Activated T-helper 1 cell treated with anti-CD3 and anti-CD28 coated beads, Interleukin-12 subunit alpha, Interleukin-12 subunit beta, Interleukin-2, Interleukin-4 antibody, amounts not matched to agents 30 ng/mL and 10 ng/mL and 1 ng/mL, durations not matched to agents 14 hours and 24 hours and 36 hours (primary cell): ENCODE measurements at regions of chr20 and their contacts with region 1.

Region 1: GRCh38 chr20:44885392-44886265 is at the start of gene YWHAB:
- DNase-seq: peak; percentile 97
- H3K4me3 Mint-ChIP-seq: peak within 1 kb of the TSS; percentile 95
- H3K27ac Mint-ChIP-seq: peak within 1 kb of the TSS; percentile 94
- H3K4me1 Mint-ChIP-seq: peaks cover 54% of the 10 kb centered on the region
- H3K27me3 Mint-ChIP-seq: no peaks in the 10 kb centered on the region
- total RNA-seq, gene YWHAB: 230 and 246 TPM in 2 replicates

Region 2: GRCh38 chr20:44475694-44476560 is 409.7 kb before region 1 on chr20 and contains the start of gene TTPAL:
- intact Hi-C with region 1: loop called (anchors 2 kb)
- DNase-seq: peak; percentile 90
- H3K4me3 Mint-ChIP-seq: peak within 1 kb of the TSS; percentile 95
- H3K27ac Mint-ChIP-seq: peak within 1 kb of the TSS; percentile 93
- H3K4me1 Mint-ChIP-seq: peaks cover 20% of the 10 kb centered on the region
- H3K27me3 Mint-ChIP-seq: peaks cover 3% of the 10 kb centered on the region
- total RNA-seq, gene TTPAL: 22.9 and 24.7 TPM in 2 replicates

Region 3: GRCh38 chr20:44738813-44739477 is 146.7 kb before region 1 on chr20:
- intact Hi-C with region 1: loop called (anchors 1 kb)
- DNase-seq: peak; percentile 63
- H3K4me3 Mint-ChIP-seq: peak overlapping the region; percentile 77
- H3K27ac Mint-ChIP-seq: peak overlapping the region; percentile 23
- H3K4me1 Mint-ChIP-seq: peaks cover 34% of the 10 kb centered on the region
- H3K27me3 Mint-ChIP-seq: peaks cover 4% of the 10 kb centered on the region

Region 4: DNA sequence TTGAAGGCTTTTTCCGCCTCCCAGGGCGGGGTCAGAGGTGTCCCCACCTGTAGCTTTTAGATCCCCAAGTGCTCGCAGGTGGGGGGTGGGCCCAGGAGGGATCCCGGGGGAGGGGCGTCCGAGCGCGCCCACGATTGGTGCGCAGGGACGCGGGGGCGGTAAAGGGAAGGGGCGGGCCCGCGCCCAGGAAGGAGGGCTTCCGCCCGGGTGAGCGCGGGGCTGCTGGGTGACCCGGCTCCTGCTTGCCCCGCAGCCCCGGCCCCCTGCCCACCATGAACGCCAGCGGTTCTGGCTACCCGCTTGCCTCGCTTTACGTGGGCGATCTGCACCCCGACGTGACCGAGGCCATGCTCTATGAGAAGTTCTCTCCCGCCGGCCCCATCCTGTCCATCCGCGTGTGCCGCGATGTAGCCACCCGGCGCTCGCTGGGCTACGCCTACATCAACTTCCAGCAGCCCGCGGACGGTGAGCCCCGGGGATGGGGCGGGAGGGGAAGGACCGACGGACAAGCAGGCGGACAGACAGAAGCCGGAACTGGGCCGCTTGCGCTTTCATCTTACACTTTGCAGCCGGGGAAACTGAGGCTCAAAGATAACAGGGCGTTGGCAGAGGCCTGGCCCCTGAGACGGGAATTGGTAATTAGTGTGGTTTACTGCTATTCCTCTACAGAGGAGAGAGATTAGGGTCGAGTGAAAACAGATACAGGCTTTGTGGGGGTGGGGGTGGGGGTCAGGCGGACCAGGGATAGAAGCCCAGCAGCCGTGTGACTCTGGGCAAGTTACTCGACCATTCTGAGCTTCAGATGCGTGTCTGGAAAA is 24.5 kb after region 1 on chr20 and contains the start of gene PABPC1L:
- intact Hi-C with region 1: loop called (anchors 1 kb)
- DNase-seq: peak; percentile 72
- H3K4me3 Mint-ChIP-seq: peak within 1 kb of the TSS; percentile 87
- H3K27ac Mint-ChIP-seq: peak within 1 kb of the TSS; percentile 84
- H3K4me1 Mint-ChIP-seq: peaks cover 32% of the 10 kb centered on the region
- H3K27me3 Mint-ChIP-seq: no peaks in the 10 kb centered on the region
- total RNA-seq, gene PABPC1L: 101 and 106 TPM in 2 replicates

Region 5: DNA sequence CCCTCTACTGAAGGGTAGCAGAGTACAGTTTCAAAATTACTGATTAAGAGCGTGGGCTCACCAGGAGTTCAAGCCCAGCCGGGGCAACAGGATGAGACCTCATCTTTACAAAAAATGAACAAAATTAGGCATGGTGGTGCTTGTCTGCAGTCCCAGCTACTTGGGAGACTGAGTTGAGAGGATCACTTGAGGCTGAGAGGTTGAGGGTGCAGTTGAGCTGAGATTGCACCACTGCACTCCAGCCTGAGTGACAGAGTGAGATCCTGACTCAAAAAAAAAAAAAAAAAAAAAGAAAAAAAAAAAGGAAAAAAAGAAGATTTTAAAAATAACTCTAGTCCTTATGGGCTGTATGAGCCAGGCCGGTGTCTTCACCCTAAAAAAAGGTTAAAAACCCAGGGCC is 43.0 kb after region 1 on chr20:
- intact Hi-C with region 1: no loop called
- DNase-seq: no peak
- H3K4me3 Mint-ChIP-seq: no peak overlapping the region
- H3K27ac Mint-ChIP-seq: no peak overlapping the region
- H3K4me1 Mint-ChIP-seq: no peaks in the 10 kb centered on the region
- H3K27me3 Mint-ChIP-seq: no peaks in the 10 kb centered on the region

Region 6: DNA sequence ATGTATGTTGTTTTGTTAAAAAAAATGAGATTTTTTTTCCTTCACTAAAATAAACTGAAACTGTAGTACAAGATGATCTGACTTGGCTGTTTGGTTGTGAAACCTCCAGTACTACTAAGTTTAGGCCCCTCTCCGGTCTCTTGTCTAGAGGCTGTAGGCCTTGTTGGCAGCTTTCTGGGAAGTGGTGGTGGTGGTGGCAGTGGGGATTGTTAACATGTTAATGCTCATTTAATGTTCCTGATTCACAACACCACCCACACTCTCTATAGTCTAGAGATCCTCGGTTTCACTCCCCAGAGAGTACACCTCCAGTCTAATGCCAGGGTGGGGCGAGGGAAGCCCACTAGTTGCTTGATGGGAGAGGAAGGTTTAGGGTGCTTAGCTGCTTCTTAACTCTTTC is 104.8 kb after region 1 on chr20:
- intact Hi-C with region 1: loop called (anchors 1 kb)
- DNase-seq: no peak
- H3K4me3 Mint-ChIP-seq: peak overlapping the region; percentile 82
- H3K27ac Mint-ChIP-seq: peak overlapping the region; percentile 94
- H3K4me1 Mint-ChIP-seq: peaks cover 71% of the 10 kb centered on the region
- H3K27me3 Mint-ChIP-seq: no peaks in the 10 kb centered on the region

Region 7: DNA sequence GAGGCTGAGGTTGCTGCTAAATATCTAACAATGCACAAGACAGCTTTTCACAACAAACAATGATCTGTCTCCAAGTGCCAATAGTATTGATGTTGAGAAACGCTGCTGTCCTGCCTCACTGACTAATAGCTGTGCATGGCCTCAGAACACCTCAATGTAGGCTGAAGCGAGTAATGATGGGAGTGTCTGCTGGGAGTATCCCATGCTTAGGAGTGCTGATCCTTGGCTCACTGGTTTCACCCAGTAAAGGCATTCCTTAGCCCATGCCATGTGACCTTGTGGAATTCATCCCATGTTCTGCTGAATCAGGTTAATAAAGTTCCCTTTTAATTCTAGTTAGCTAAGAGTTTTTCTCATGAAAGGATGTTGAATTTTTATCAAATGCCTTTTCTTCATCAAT is 242.4 kb after region 1 on chr20:
- intact Hi-C with region 1: no loop called
- DNase-seq: no peak
- H3K4me3 Mint-ChIP-seq: no peak overlapping the region
- H3K27ac Mint-ChIP-seq: no peak overlapping the region
- H3K4me1 Mint-ChIP-seq: no peaks in the 10 kb centered on the region
- H3K27me3 Mint-ChIP-seq: peaks cover 42% of the 10 kb centered on the region

Region 8: GRCh38 chr20:45792332-45792686 is 906.7 kb after region 1 on chr20:
- intact Hi-C with region 1: loop called (anchors 5 kb)
- DNase-seq: no peak
- H3K4me3 Mint-ChIP-seq: peak overlapping the region; percentile 82
- H3K27ac Mint-ChIP-seq: peak overlapping the region; percentile 89
- H3K4me1 Mint-ChIP-seq: peaks cover 24% of the 10 kb centered on the region
- H3K27me3 Mint-ChIP-seq: peaks cover 3% of the 10 kb centered on the region